CD4-positive, alpha-beta T cell (primary cell): ENCODE measurements at regions of chr3 and their contacts with region 1.

Region 1: GRCh38 chr3:196942226-196942914 is at the start of gene NCBP2:
- DNase-seq: peak; percentile 98 to 100 (median 99)
- ATAC-seq: peak; percentile 92
- H3K4me3 ChIP-seq: peak within 1 kb of the TSS; percentile 89
- H3K4me3 Mint-ChIP-seq: peak within 1 kb of the TSS; percentile 99
- H3K27ac ChIP-seq: peak within 1 kb of the TSS; percentile 94 to 97
- H3K27ac Mint-ChIP-seq: peak within 1 kb of the TSS; percentile 96
- H3K4me1 ChIP-seq: peaks cover 24% of the 10 kb centered on the region
- H3K4me1 Mint-ChIP-seq: peaks cover 51% of the 10 kb centered on the region
- H3K27me3 ChIP-seq: no peaks in the 10 kb centered on the region
- H3K27me3 Mint-ChIP-seq: no peaks in the 10 kb centered on the region
- CTCF ChIP-seq: peak; percentile 59
- total RNA-seq, gene NCBP2: 41.4 to 44.6 TPM

Region 2: GRCh38 chr3:196837819-196838420 is 104.5 kb before region 1 on chr3:
- CTCF ChIA-PET with region 1: interaction called, 14 read pairs
- POLR2A ChIA-PET with region 1: interaction called, 3 read pairs
- intact Hi-C with region 1: no loop called
- DNase-seq: peak; percentile 54 to 87 (median 68)
- ATAC-seq: peak; percentile 95
- H3K4me3 ChIP-seq: no peak overlapping the region
- H3K4me3 Mint-ChIP-seq: no peak overlapping the region
- H3K27ac ChIP-seq: no peak overlapping the region
- H3K27ac Mint-ChIP-seq: peak overlapping the region; percentile 8
- H3K4me1 ChIP-seq: no peaks in the 10 kb centered on the region
- H3K4me1 Mint-ChIP-seq: no peaks in the 10 kb centered on the region
- H3K27me3 ChIP-seq: no peaks in the 10 kb centered on the region
- H3K27me3 Mint-ChIP-seq: no peaks in the 10 kb centered on the region
- CTCF ChIP-seq: peak; percentile 76

Region 3: DNA sequence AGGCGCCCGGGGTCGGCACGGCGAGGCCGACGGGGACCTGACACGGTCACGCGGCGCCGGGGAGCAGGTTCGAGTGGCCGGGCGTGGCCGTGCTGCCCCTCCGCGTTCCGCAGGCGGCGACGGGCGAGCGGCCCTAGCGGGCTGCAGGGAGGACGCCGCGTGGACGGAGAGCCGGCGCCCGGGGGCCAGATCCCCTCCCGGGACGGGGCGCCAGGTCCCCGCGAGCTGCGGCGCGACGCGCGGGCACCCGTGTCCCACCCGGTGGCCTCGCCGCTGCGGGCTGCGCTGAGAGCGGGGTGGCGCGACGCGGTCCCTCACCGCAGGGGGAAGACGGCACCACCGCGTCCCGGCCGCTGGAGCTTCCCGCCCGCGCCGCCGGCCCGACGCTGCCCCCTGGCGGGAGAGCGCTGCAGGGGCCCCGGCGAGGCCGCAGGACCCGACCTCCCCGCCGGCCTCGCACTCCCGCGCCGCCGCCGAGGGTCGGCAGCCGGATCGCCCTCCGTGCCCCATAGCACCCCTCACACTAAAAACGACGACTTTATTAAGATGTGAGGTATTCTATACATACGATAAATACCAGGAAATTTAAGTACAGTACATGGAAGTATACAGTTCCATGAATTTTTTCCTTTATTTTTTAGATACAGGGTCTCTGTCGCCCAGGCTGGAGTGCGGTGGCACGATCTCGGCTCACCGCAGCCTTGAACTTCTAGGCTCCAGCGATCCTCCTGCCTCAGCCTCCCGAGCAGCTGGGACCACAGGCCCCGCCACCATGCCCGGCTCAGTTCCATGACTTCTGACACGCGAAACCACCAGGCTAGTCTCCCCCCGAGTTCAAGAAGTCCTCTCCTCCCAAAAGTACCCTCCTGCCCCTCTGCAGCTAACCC is 27.5 kb after region 1 on chr3:
- CTCF ChIA-PET with region 1: interaction called, 5 read pairs
- POLR2A ChIA-PET with region 1: interaction called, 10 read pairs
- intact Hi-C with region 1: loop called (anchors 2 kb)
- DNase-seq: peak in 13 of 14 experiments; percentile 37 to 89 (median 56)
- ATAC-seq: peak; percentile 70
- H3K4me3 ChIP-seq: peak overlapping the region; percentile 52
- H3K4me3 Mint-ChIP-seq: peak overlapping the region; percentile 85
- H3K27ac ChIP-seq: no peak overlapping the region
- H3K27ac Mint-ChIP-seq: peak overlapping the region; percentile 51
- H3K4me1 ChIP-seq: peaks cover 11% of the 10 kb centered on the region
- H3K4me1 Mint-ChIP-seq: peaks cover 11% of the 10 kb centered on the region
- H3K27me3 ChIP-seq: peaks cover 0 to 6% of the 10 kb centered on the region in 2 experiments
- H3K27me3 Mint-ChIP-seq: peaks cover 19% of the 10 kb centered on the region
- CTCF ChIP-seq: peak; percentile 61

Region 4: GRCh38 chr3:197298341-197298857 is 356.0 kb after region 1 on chr3 and contains the start of gene DLG1:
- CTCF ChIA-PET with region 1: no interaction called
- POLR2A ChIA-PET with region 1: interaction called, 3 read pairs
- intact Hi-C with region 1: loop called in 1 of 2 experiments (anchors 5 kb)
- DNase-seq: peak; percentile 61 to 88 (median 75)
- ATAC-seq: peak; percentile 53
- H3K4me3 ChIP-seq: peak within 1 kb of the TSS; percentile 98
- H3K4me3 Mint-ChIP-seq: peak within 1 kb of the TSS; percentile 99
- H3K27ac ChIP-seq: peak within 1 kb of the TSS; percentile 79 to 80
- H3K27ac Mint-ChIP-seq: peak within 1 kb of the TSS; percentile 92
- H3K4me1 ChIP-seq: peaks cover 11% of the 10 kb centered on the region
- H3K4me1 Mint-ChIP-seq: peaks cover 30% of the 10 kb centered on the region
- H3K27me3 ChIP-seq: peaks cover 4 to 7% of the 10 kb centered on the region in 2 experiments
- H3K27me3 Mint-ChIP-seq: peaks cover 17% of the 10 kb centered on the region
- CTCF ChIP-seq: no peak
- total RNA-seq, gene DLG1: 86.8 to 91.8 TPM